Gastrocnemius medialis (tissue), 4 donors: ENCODE measurements at regions of chr6 and their contacts with region 1.

Region 1: GRCh38 chr6:109239651-109240321 is 142.5 kb downstream of the CD164 start:
- DNase-seq: no peak
- ATAC-seq: peak; percentile 16 to 42
- H3K4me3 ChIP-seq: no peak overlapping the region
- H3K27ac ChIP-seq: peak overlapping the region; percentile 53 to 73 (median 66)
- H3K4me1 ChIP-seq: peaks cover 33 to 34% of the 10 kb centered on the region in 2 donors
- H3K27me3 ChIP-seq: no peaks in the 10 kb centered on the region
- CTCF ChIP-seq: no peak
- POLR2A ChIP-seq: no peak

Region 2: GRCh38 chr6:109212683-109213082 is 27.1 kb before region 1 on chr6:
- in situ Hi-C with region 1: no loop called
- intact Hi-C with region 1: no loop called
- DNase-seq: no peak
- ATAC-seq: no peak
- H3K4me3 ChIP-seq: no peak overlapping the region
- H3K27ac ChIP-seq: no peak overlapping the region
- H3K4me1 ChIP-seq: no peaks in the 10 kb centered on the region
- H3K27me3 ChIP-seq: no peaks in the 10 kb centered on the region
- CTCF ChIP-seq: no peak
- POLR2A ChIP-seq: no peak

Region 3: DNA sequence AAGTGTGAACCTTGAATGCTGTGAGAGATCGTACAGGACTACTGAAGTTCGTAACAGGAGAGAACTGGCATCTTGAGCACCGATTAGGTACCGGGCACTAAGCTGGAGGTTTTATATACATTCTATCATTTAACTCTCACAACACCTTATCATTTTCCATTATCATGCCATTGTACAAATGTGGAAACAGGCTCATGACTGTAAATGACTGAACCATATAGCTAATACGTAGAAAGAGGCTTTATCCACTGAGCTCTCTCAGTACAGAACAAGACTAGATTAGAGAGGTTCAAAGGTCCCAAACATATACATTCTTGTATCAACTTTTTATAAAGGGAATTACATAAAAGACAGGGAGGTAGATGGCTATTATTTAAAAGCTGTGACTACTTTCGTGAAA is 13.8 kb before region 1 on chr6:
- in situ Hi-C with region 1: no loop called
- intact Hi-C with region 1: loop called (anchors 1 kb)
- DNase-seq: no peak
- ATAC-seq: no peak
- H3K4me3 ChIP-seq: no peak overlapping the region
- H3K27ac ChIP-seq: no peak overlapping the region
- H3K4me1 ChIP-seq: peaks cover 26 to 36% of the 10 kb centered on the region in 2 donors
- H3K27me3 ChIP-seq: no peaks in the 10 kb centered on the region
- CTCF ChIP-seq: no peak
- POLR2A ChIP-seq: no peak

Region 4: GRCh38 chr6:109322825-109323224 is 83.0 kb after region 1 on chr6:
- in situ Hi-C with region 1: no loop called
- intact Hi-C with region 1: no loop called
- DNase-seq: peak in 1 of 2 donors; percentile 42
- ATAC-seq: no peak
- H3K4me3 ChIP-seq: no peak overlapping the region
- H3K27ac ChIP-seq: no peak overlapping the region
- H3K4me1 ChIP-seq: peaks cover 14 to 16% of the 10 kb centered on the region in 2 donors
- H3K27me3 ChIP-seq: no peaks in the 10 kb centered on the region
- CTCF ChIP-seq: no peak
- POLR2A ChIP-seq: no peak